Mammary epithelial cell (primary cell): ENCODE measurements at regions of chr4 and their contacts with region 1.

Region 1: GRCh38 chr4:186201535-186202230 is 10.3 kb downstream of the CYP4V2 start:
- DNase-seq: peak; percentile 33
- H3K4me3 ChIP-seq: no peak overlapping the region
- H3K27ac ChIP-seq: no peak overlapping the region
- H3K4me1 ChIP-seq: no peaks in the 10 kb centered on the region
- H3K27me3 ChIP-seq: no peaks in the 10 kb centered on the region
- CTCF ChIP-seq: peak; percentile 61 to 68

Region 2: GRCh38 chr4:185559913-185560281 is 641.8 kb before region 1 on chr4:
- CTCF ChIA-PET with region 1: no interaction called
- dilution Hi-C with region 1: no loop called
- in situ Hi-C with region 1: no loop called
- intact Hi-C with region 1: no loop called
- DNase-seq: peak; percentile 75
- H3K4me3 ChIP-seq: no peak overlapping the region
- H3K27ac ChIP-seq: no peak overlapping the region
- H3K4me1 ChIP-seq: peaks cover 5% of the 10 kb centered on the region
- H3K27me3 ChIP-seq: no peaks in the 10 kb centered on the region
- CTCF ChIP-seq: no peak

Region 3: GRCh38 chr4:186067757-186068385 is 133.8 kb before region 1 on chr4:
- CTCF ChIA-PET with region 1: no interaction called
- dilution Hi-C with region 1: no loop called
- in situ Hi-C with region 1: no loop called
- intact Hi-C with region 1: loop called (anchors 1 kb)
- DNase-seq: peak; percentile 32
- H3K4me3 ChIP-seq: peak overlapping the region in 1 of 3 experiments; percentile 48
- H3K27ac ChIP-seq: no peak overlapping the region
- H3K4me1 ChIP-seq: peaks cover 10% of the 10 kb centered on the region
- H3K27me3 ChIP-seq: no peaks in the 10 kb centered on the region
- CTCF ChIP-seq: peak; percentile 29 to 62